Psoas muscle (tissue), 8 donors: ENCODE measurements at regions of chr15 and their contacts with region 1.

Region 1: GRCh38 chr15:36810656-36811449 is 231.4 kb downstream of the CDIN1 start:
- DNase-seq: no peak
- ATAC-seq: no peak
- H3K4me3 ChIP-seq: no peak overlapping the region
- H3K27ac ChIP-seq: no peak overlapping the region
- H3K4me1 ChIP-seq: no peaks in the 10 kb centered on the region
- H3K27me3 ChIP-seq: no peaks in the 10 kb centered on the region
- CTCF ChIP-seq: no peak

Region 2: DNA sequence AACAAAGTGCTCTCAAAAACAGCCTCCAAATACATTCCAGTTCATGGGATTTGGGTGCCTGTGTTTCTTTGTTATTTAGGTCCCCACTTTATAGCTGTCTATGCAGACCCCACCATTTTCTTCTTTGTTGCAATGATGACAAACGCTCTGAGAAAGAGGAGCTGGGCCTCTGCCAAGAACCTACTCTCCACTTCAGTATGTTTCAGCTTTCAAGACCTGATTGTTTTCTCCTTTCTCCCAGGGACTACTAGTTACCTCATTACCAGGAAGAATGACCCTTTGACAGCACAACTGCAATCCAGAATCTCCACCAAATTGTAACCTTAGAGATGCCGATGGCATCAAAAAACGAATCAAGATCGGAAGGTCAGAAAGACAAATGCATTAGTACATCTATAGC is 52.7 kb after region 1 on chr15:
- intact Hi-C with region 1: loop called in 1 of 2 experiments (anchors 10 kb)
- DNase-seq: no peak
- ATAC-seq: no peak
- H3K4me3 ChIP-seq: no peak overlapping the region
- H3K27ac ChIP-seq: no peak overlapping the region
- H3K4me1 ChIP-seq: no peaks in the 10 kb centered on the region
- H3K27me3 ChIP-seq: peaks cover 3 to 6% (median 4%) of the 10 kb centered on the region in 3 donors
- CTCF ChIP-seq: no peak